Activated naive CD4-positive, alpha-beta T cell treated with anti-CD3 and anti-CD28 coated beads for 36 hours (primary cell): ENCODE measurements at regions of chr15 and their contacts with region 1.

Region 1: DNA sequence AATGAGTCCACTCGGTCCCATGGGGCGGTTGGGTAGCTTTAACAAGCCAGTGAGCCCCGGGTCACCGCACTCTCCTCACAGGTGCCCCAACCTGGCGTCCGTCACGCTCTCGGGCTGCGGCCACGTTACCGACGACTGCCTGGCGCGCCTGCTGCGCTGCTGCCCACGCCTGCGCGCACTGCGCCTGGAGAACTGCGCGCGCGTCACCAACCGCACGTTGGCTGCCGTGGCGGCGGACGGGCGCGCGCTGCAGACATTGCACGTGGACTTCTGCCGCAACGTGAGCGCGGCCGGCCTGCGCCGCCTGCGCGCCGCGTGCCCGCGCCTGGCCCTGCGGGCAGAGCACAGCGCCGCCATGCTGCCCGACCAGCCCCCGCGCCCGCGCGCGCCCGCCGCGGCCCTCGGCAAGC is 3.4 kb downstream of the FBXL22 start:
- DNase-seq: peak; percentile 87
- H3K4me3 Mint-ChIP-seq: peak overlapping the region; percentile 90
- H3K27ac Mint-ChIP-seq: peak overlapping the region; percentile 93
- H3K4me1 Mint-ChIP-seq: peaks cover 54% of the 10 kb centered on the region
- H3K27me3 Mint-ChIP-seq: no peaks in the 10 kb centered on the region

Region 2: DNA sequence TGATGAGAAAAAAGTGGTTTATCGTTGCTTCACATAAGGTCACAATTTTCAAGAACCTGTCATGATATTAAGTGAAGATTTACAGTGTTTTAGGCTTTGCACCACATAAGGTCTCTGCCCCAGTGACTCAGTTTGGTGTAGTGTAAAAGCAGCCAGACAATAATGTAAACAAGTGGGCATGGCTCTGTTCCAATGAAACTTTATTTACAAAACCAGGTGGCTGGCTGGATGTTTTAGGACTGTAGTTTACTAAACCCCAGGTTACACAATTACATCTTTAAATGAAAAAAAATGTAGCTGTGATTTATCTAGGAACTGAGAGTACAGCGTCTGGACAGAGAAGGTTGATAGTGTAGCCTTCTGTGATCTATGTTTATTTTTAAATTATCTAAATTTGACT is 13.1 kb before region 1 on chr15:
- CTCF ChIA-PET with region 1: interaction called, 6 read pairs
- intact Hi-C with region 1: loop called (anchors 1 kb)
- DNase-seq: no peak
- H3K4me3 Mint-ChIP-seq: no peak overlapping the region
- H3K27ac Mint-ChIP-seq: no peak overlapping the region
- H3K4me1 Mint-ChIP-seq: peaks cover 28% of the 10 kb centered on the region
- H3K27me3 Mint-ChIP-seq: no peaks in the 10 kb centered on the region